Activated CD8-positive, alpha-beta memory T cell treated with anti-CD3 and anti-CD28 coated beads, Interleukin-2, amount 10 ng/mL, durations not matched to agents 7 days and 5 days (primary cell): ENCODE measurements at regions of chr12 and their contacts with region 1.

Region 1: GRCh38 chr12:96445691-96446583 is 43.4 kb upstream of the CFAP54 start:
- DNase-seq: peak; percentile 86
- ATAC-seq: peak; percentile 98
- H3K4me3 Mint-ChIP-seq: peak overlapping the region; percentile 37
- H3K27ac Mint-ChIP-seq: peak overlapping the region; percentile 95
- H3K4me1 Mint-ChIP-seq: peaks cover 49% of the 10 kb centered on the region
- H3K27me3 Mint-ChIP-seq: no peaks in the 10 kb centered on the region

Region 2: DNA sequence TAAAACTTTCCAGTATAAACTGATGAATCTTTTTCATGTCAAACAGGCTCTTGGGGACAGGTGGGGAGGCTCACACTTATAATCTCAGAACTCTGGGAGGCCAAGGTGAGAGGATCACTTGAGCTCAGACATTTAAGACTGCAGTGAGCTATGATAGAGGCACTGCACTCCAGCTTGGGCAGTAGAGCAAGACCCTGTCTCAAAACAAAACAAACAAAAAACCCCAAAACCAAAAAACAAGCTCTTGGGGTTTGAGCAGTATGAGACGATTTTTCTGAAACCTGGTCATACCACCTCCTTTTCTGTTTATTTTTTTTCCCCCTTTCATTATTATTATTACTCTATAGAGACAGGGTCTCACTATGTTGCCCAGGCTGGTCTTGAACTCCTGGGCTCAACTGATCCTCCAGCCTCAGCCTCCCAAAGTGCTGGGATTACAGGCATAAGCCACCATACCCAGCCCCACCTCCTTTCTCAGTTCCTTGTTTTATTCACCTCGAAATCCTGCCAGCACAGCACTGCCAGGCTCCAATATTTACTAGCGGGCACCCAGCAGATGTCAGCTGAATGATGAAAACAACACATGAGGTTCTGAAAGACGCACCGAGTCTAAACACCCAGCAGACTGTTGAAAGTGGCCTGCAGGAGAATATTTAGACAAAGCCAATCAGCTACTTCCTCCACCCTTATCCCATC is 26.2 kb before region 1 on chr12:
- CTCF ChIA-PET with region 1: interaction called, 10 read pairs
- DNase-seq: no peak
- ATAC-seq: peak; percentile 61
- H3K4me3 Mint-ChIP-seq: no peak overlapping the region
- H3K27ac Mint-ChIP-seq: peak overlapping the region; percentile 34
- H3K4me1 Mint-ChIP-seq: peaks cover 53% of the 10 kb centered on the region
- H3K27me3 Mint-ChIP-seq: peaks cover 3% of the 10 kb centered on the region